ENCODE measurements at regions of chr20 and their contacts with region 1.

Region 1: DNA sequence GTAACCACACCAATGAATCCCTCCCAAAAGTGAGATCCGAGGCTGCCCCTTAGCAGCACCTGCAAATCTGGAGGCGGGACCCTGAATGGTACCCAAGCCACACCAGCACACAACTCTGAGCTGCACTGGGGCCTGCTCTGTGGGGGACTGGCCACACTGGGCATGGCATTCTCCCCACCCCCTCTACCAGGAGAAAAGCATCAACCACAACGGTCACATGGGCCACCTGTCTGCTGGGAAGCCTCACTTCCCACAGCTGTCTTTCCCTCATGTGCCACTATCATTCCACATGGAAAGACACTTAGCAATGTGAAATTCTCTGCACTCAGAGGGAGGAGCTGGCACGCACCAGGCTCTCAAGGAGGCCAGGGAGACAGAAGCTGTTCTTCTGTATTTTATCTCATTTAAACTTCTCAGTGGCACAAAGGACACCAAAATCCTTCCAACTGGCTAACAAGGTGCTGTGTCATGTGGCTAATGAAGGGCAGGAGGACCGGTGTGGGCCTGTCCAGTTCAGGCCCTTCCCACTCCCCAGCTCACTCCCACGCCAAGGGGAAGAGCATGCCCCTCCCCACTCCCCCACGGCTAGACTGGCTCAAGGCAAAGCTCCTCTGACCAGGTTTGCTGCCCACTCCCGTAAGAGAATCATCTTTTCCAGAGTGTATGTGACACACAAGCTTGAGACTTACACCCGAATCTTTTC is 19.0 kb downstream of the YTHDF1 start:
- DNase-seq: no peak
- H3K4me3 ChIP-seq: no peak overlapping the region
- CTCF ChIP-seq: no peak

Region 2: DNA sequence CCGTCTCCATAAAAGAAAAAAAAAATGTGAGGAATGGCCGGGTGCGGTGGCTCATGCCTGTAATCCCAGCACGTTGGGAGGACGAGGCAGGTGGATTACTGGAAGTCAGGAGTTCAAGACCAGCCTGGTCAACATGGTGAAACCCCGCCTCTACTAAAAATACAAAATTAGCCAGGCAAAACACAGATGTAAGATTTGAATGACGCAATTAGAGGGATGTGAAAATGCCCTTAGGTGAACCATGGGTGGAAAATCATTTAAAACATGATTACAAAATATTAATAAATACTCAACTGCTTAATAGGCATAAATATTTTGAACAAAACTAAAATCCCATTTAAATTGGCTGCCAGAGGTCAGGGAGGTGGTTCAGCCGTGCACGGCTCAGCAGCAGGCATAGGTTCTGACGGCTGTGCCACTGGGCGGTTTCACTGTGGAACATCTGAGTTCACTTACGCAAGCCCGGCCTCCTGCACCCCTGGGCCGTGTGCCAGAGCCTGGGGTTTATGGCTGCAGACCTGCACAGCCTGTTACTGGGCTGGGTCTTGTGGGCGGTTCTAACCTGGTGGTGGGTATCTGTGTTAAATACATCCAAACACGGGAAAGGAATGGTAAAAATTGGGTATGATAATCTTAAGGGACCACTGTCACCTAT is 359.0 kb before region 1 on chr20:
- CTCF ChIA-PET with region 1: no interaction called
- POLR2A ChIA-PET with region 1: no interaction called
- DNase-seq: no peak
- H3K4me3 ChIP-seq: no peak overlapping the region
- CTCF ChIP-seq: no peak

Region 3: GRCh38 chr20:63183422-63184348 is 13.2 kb before region 1 on chr20:
- CTCF ChIA-PET with region 1: interaction called, 11 read pairs
- POLR2A ChIA-PET with region 1: interaction called, 5 read pairs
- DNase-seq: no peak
- H3K4me3 ChIP-seq: no peak overlapping the region
- CTCF ChIP-seq: peak; percentile 83

Region 4: GRCh38 chr20:63216041-63216848 is 19.3 kb after region 1 on chr20 and contains the start of gene YTHDF1:
- CTCF ChIA-PET with region 1: interaction called, 15 read pairs
- POLR2A ChIA-PET with region 1: no interaction called
- DNase-seq: peak; percentile 29
- H3K4me3 ChIP-seq: peak within 1 kb of the TSS; percentile 72
- CTCF ChIP-seq: no peak